Mammary epithelial cell (primary cell): ENCODE measurements at regions of chr7 and their contacts with region 1.

Region 1: DNA sequence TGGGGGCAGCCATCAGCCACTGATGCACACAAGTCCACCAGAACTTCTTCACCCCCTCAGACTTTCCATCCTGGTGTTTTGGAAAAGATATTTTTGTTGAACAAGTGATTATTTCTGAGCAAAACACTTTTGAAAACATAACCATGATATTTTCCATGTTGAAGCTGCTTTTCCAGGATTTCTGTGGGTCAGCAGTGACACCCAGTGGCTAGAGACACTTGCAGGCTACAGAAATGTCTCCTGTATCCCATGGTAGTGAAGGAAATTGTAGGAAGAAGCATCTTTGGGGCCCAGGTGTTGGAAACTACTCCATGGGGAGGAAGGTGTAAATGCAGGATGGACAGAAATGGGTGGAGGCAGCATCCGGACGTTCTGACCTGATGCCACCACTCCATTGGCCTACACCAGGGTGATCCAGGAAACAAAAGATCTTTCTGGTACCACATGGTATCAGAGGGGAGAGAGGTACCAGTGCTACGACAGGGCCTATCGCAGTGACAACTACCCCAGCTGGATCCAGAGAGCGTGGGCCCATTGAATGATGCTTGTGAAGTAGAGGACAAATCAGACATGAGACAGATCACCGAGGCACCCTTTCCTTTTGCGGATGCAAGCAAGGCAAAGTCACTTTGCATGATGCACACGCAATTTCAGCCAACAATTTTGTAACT is 111.7 kb upstream of the COBL start:
- DNase-seq: no peak
- H3K4me3 ChIP-seq: no peak overlapping the region
- H3K27ac ChIP-seq: no peak overlapping the region
- H3K4me1 ChIP-seq: no peaks in the 10 kb centered on the region
- H3K27me3 ChIP-seq: no peaks in the 10 kb centered on the region
- CTCF ChIP-seq: peak; percentile 13 to 41

Region 2: DNA sequence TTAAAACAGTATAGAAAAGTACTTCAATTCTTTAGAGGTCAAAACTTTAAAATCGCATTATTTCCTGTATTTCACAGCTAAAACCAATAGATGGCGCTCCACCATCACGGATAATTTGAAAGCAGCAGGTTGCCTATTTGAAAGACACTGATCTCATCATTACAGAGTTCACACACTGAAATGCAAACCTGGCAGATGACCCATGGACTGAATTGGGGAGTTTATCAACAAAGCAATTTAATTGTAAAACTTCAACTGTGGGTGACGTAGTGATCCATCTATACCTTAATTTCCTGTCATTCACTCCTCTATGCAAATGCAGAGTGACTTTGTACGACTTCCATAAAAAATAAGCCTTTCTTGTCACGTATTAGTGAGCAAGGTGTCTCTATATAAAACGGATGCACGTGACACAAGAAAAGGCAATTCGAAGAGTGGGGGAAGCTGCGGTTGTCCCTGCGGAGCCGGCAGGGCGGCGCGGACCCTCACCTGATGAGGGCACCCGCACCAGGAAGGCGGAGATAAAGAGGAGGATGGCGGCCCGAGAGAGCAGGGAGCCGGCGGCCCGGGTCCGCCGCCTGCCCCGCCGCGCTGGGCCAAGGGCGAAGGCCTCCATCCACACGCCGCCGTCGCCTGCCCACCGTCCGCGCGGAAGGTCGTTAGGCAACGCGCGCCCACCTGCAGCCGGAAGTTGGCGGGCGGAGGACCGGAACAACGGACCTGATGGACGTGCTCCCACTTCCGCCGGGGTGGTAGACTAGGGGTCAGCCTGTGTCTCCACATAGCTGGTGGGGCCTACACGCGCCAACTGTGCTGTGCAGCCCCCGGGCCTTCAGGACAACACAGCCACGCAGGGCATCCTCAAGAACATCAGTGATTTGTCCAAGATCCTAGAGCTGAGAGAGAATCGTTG is 1335.5 kb before region 1 on chr7 and contains the start of gene ZPBP:
- CTCF ChIA-PET with region 1: no interaction called
- dilution Hi-C with region 1: no loop called
- in situ Hi-C with region 1: no loop called
- intact Hi-C with region 1: loop called (anchors 5 kb)
- DNase-seq: peak; percentile 25
- H3K4me3 ChIP-seq: peak within 1 kb of the TSS in 2 of 3 experiments; percentile 38 to 40
- H3K27ac ChIP-seq: no peak within 1 kb of the TSS
- H3K4me1 ChIP-seq: no peaks in the 10 kb centered on the region
- H3K27me3 ChIP-seq: peaks cover 4% of the 10 kb centered on the region
- CTCF ChIP-seq: peak; percentile 67 to 71
- total RNA-seq, gene ZPBP: 0.17 TPM in 1 of 2 donors, not detected in the other

Region 3: GRCh38 chr7:51759985-51760384 is 331.6 kb after region 1 on chr7:
- CTCF ChIA-PET with region 1: no interaction called
- dilution Hi-C with region 1: no loop called
- in situ Hi-C with region 1: no loop called
- intact Hi-C with region 1: no loop called
- DNase-seq: no peak
- H3K4me3 ChIP-seq: no peak overlapping the region
- H3K27ac ChIP-seq: no peak overlapping the region
- H3K4me1 ChIP-seq: no peaks in the 10 kb centered on the region
- H3K27me3 ChIP-seq: no peaks in the 10 kb centered on the region
- CTCF ChIP-seq: no peak